ENCODE measurements at regions of chr17 and their contacts with region 1.

Region 1: GRCh38 chr17:31517524-31517923 is 126.0 kb downstream of the RAB11FIP4 start:
- DNase-seq: peak in 3 of 4 experiments; percentile 49 to 63 (median 58)
- ATAC-seq: peak; percentile 68
- H3K4me3 ChIP-seq: no peak overlapping the region
- H3K27ac ChIP-seq: no peak overlapping the region
- H3K4me1 ChIP-seq: peaks cover 3 to 14% of the 10 kb centered on the region in 2 experiments; a peak in 2 of 5 replicates
- H3K27me3 ChIP-seq: no peaks in the 10 kb centered on the region
- CTCF ChIP-seq: peak; percentile 63 to 73 (median 66)
- EP300 ChIP-seq: no peak
- POLR2A ChIP-seq: no peak
- RAD21 ChIP-seq: peak; percentile 70 to 88

Region 2: GRCh38 chr17:31388770-31389661 is 128.5 kb before region 1 on chr17:
- CTCF ChIA-PET with region 1: interaction called, 3 read pairs
- POLR2A ChIA-PET with region 1: no interaction called
- in situ Hi-C with region 1: no loop called
- intact Hi-C with region 1: loop called (anchors 2 kb)
- DNase-seq: peak; percentile 45 to 74 (median 70)
- ATAC-seq: peak; percentile 85
- H3K4me3 ChIP-seq: no peak overlapping the region
- H3K27ac ChIP-seq: no peak overlapping the region
- H3K4me1 ChIP-seq: peaks cover 0 to 21% of the 10 kb centered on the region in 2 experiments; a peak in 3 of 5 replicates
- H3K27me3 ChIP-seq: peaks cover 17 to 45% of the 10 kb centered on the region in 2 experiments; a peak in 4 of 5 replicates
- CTCF ChIP-seq: peak; percentile 77 to 86 (median 82)
- EP300 ChIP-seq: no peak
- POLR2A ChIP-seq: no peak
- RAD21 ChIP-seq: peak; percentile 45 to 69; a peak in 3 of 4 replicates

Region 3: GRCh38 chr17:31433091-31433790 is 84.3 kb before region 1 on chr17:
- CTCF ChIA-PET with region 1: interaction called, 29 read pairs
- POLR2A ChIA-PET with region 1: interaction called, 5 read pairs
- in situ Hi-C with region 1: no loop called
- intact Hi-C with region 1: loop called (anchors 1 kb)
- DNase-seq: no peak
- ATAC-seq: 0 out of 3 replicates have a peak, but pooled peaks have one; percentile 11
- H3K4me3 ChIP-seq: no peak overlapping the region
- H3K27ac ChIP-seq: no peak overlapping the region
- H3K4me1 ChIP-seq: peaks cover 0 to 16% of the 10 kb centered on the region in 2 experiments; a peak in 2 of 5 replicates
- H3K27me3 ChIP-seq: peaks cover 35 to 61% of the 10 kb centered on the region in 2 experiments
- CTCF ChIP-seq: no peak
- EP300 ChIP-seq: no peak
- POLR2A ChIP-seq: no peak
- RAD21 ChIP-seq: no peak

Region 4: GRCh38 chr17:31476525-31477416 is 40.8 kb before region 1 on chr17:
- CTCF ChIA-PET with region 1: no interaction called
- POLR2A ChIA-PET with region 1: no interaction called
- in situ Hi-C with region 1: no loop called
- intact Hi-C with region 1: no loop called
- DNase-seq: no peak
- ATAC-seq: 0 out of 3 replicates have a peak, but pooled peaks have one; percentile 23
- H3K4me3 ChIP-seq: no peak overlapping the region
- H3K27ac ChIP-seq: no peak overlapping the region
- H3K4me1 ChIP-seq: peaks cover 5 to 20% of the 10 kb centered on the region in 2 experiments; a peak in 4 of 5 replicates
- H3K27me3 ChIP-seq: peaks cover 0 to 9% of the 10 kb centered on the region in 2 experiments; a peak in 3 of 5 replicates
- CTCF ChIP-seq: no peak
- EP300 ChIP-seq: no peak
- POLR2A ChIP-seq: no peak
- RAD21 ChIP-seq: no peak

Measured in K562 (cell line).